MCF 10A (cell line): ENCODE measurements at regions of chr6 and their contacts with region 1.

Region 1: GRCh38 chr6:130282234-130282995 is 59.7 kb upstream of the SAMD3 start:
- DNase-seq: peak; percentile 61
- H3K4me3 Mint-ChIP-seq: no peak overlapping the region
- H3K27ac Mint-ChIP-seq: no peak overlapping the region
- H3K4me1 Mint-ChIP-seq: no peaks in the 10 kb centered on the region
- H3K27me3 Mint-ChIP-seq: no peaks in the 10 kb centered on the region
- CTCF ChIP-seq: peak; percentile 41

Region 2: GRCh38 chr6:130037207-130037811 is 245.1 kb before region 1 on chr6:
- CTCF ChIA-PET with region 1: interaction called, 7 read pairs
- POLR2A ChIA-PET with region 1: no interaction called
- intact Hi-C with region 1: loop called (anchors 2 kb)
- DNase-seq: peak; percentile 28
- H3K4me3 Mint-ChIP-seq: no peak overlapping the region
- H3K27ac Mint-ChIP-seq: no peak overlapping the region
- H3K4me1 Mint-ChIP-seq: peaks cover 7% of the 10 kb centered on the region
- H3K27me3 Mint-ChIP-seq: no peaks in the 10 kb centered on the region
- CTCF ChIP-seq: peak; percentile 47

Region 3: DNA sequence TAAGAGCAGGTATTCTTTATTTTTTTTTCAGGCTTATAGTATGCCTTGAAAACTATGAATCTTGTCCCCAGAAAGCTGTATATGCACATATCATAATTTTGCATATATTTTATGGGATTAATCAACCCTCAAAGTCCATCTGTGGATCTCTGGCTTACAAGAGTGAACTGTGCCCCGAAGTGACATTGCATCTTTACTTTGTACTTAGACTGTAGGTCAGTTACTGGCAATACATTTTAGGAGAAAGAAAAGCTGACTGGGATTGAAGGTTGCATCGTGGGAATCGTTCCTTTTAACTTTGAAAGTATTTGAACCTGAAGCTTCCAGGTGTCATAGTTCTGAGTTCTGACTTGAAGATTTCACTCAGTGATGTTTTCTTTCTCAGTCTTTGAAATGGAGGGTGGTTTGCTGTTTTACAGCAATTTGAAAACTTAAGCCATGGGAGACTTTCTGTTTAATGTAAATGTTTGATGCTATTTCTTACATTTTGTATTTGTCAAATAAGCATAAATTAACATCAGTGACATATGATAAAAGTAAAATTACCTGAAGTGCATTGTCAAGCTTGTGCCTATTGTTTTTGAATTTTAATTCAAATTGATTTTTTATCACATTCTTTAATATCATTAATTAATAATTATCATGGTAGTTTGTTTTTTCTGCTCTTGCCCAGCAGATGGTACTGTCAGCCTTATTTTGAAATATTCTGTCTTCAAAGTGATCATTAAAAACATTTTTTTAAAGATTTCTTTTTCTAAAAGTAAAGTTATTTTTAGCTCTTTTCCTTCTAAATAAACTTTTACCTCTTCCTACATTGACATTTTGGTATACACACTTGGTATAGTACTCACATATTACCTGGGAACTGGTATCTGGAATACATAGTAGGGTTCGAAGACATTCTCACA is 235.1 kb before region 1 on chr6:
- CTCF ChIA-PET with region 1: interaction called, 13 read pairs
- POLR2A ChIA-PET with region 1: no interaction called
- intact Hi-C with region 1: no loop called
- DNase-seq: no peak
- H3K4me3 Mint-ChIP-seq: no peak overlapping the region
- H3K27ac Mint-ChIP-seq: no peak overlapping the region
- H3K4me1 Mint-ChIP-seq: no peaks in the 10 kb centered on the region
- H3K27me3 Mint-ChIP-seq: no peaks in the 10 kb centered on the region
- CTCF ChIP-seq: no peak

Region 4: GRCh38 chr6:130076512-130076911 is 205.9 kb before region 1 on chr6:
- CTCF ChIA-PET with region 1: interaction called, 17 read pairs
- POLR2A ChIA-PET with region 1: no interaction called
- intact Hi-C with region 1: loop called (anchors 1 kb)
- DNase-seq: no peak
- H3K4me3 Mint-ChIP-seq: no peak overlapping the region
- H3K27ac Mint-ChIP-seq: no peak overlapping the region
- H3K4me1 Mint-ChIP-seq: no peaks in the 10 kb centered on the region
- H3K27me3 Mint-ChIP-seq: no peaks in the 10 kb centered on the region
- CTCF ChIP-seq: no peak

Region 5: GRCh38 chr6:130967502-130968445 is 685.4 kb after region 1 on chr6:
- CTCF ChIA-PET with region 1: no interaction called
- POLR2A ChIA-PET with region 1: no interaction called
- intact Hi-C with region 1: no loop called
- DNase-seq: no peak
- H3K4me3 Mint-ChIP-seq: no peak overlapping the region
- H3K27ac Mint-ChIP-seq: no peak overlapping the region
- H3K4me1 Mint-ChIP-seq: no peaks in the 10 kb centered on the region
- H3K27me3 Mint-ChIP-seq: no peaks in the 10 kb centered on the region
- CTCF ChIP-seq: no peak